ENCODE measurements at regions of chr16 and their contacts with region 1.

Region 1: GRCh38 chr16:26672206-26672605 is 394.5 kb upstream of the C16orf82 start:
- DNase-seq: peak; percentile 59
- H3K4me3 Mint-ChIP-seq: peak overlapping the region; percentile 48
- H3K27ac Mint-ChIP-seq: peak overlapping the region; percentile 92
- H3K4me1 Mint-ChIP-seq: peaks cover 33% of the 10 kb centered on the region
- H3K27me3 Mint-ChIP-seq: peaks cover 2% of the 10 kb centered on the region

Region 2: GRCh38 chr16:26772503-26772902 is 100.3 kb after region 1 on chr16:
- intact Hi-C with region 1: loop called (anchors 10 kb)
- DNase-seq: no peak
- H3K4me3 Mint-ChIP-seq: no peak overlapping the region
- H3K27ac Mint-ChIP-seq: peak overlapping the region; percentile 68
- H3K4me1 Mint-ChIP-seq: peaks cover 20% of the 10 kb centered on the region
- H3K27me3 Mint-ChIP-seq: peaks cover 9% of the 10 kb centered on the region